Activated naive CD4-positive, alpha-beta T cell treated with anti-CD3 and anti-CD28 coated beads for 36 hours (primary cell): ENCODE measurements at regions of chr1 and their contacts with region 1.

Region 1: GRCh38 chr1:92831762-92832536 is at the start of gene RPL5:
- DNase-seq: peak; percentile 98
- H3K4me3 Mint-ChIP-seq: peak within 1 kb of the TSS; percentile 98
- H3K27ac Mint-ChIP-seq: peak within 1 kb of the TSS; percentile 99
- H3K4me1 Mint-ChIP-seq: peaks cover 38% of the 10 kb centered on the region
- H3K27me3 Mint-ChIP-seq: no peaks in the 10 kb centered on the region
- total RNA-seq, gene RPL5: 1,793 to 1,819 TPM

Region 2: DNA sequence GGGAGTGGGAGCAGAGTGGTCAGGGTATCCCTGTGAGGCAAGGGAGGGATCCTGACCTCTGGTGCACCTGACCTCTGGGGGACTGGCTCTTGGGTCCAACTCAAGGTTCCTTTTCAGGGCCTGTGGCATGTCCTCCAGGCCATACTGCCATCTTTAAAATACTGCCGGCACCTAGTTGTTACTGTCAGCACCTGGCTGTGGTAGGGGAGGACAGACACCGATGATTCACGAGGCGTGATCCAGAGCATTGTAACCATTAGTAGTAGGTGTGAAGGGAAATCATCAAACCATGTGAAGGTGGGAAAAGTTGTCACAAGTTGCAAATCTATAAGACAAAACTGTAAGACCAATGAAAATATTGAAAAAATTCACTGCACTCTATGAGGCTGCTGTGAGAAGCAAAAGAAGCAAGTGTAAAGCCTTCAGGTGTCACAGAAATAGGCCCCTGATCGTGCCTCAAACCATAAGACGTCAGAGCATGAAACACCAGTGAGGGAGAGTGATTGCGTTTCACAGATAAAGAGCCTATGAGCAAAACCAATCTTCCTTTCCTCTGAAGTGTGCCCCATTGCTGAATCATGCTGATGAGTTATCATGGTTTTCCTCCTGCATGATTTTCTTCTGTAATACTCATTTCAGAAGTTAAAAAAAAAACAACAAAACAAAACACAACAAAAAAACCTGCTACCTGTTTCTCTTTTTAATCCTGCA is 1276.0 kb before region 1 on chr1:
- CTCF ChIA-PET with region 1: no interaction called
- intact Hi-C with region 1: loop called (anchors 5 kb)
- DNase-seq: peak; percentile 84
- H3K4me3 Mint-ChIP-seq: peak overlapping the region; percentile 26
- H3K27ac Mint-ChIP-seq: peak overlapping the region; percentile 90
- H3K4me1 Mint-ChIP-seq: peaks cover 68% of the 10 kb centered on the region
- H3K27me3 Mint-ChIP-seq: no peaks in the 10 kb centered on the region

Region 3: DNA sequence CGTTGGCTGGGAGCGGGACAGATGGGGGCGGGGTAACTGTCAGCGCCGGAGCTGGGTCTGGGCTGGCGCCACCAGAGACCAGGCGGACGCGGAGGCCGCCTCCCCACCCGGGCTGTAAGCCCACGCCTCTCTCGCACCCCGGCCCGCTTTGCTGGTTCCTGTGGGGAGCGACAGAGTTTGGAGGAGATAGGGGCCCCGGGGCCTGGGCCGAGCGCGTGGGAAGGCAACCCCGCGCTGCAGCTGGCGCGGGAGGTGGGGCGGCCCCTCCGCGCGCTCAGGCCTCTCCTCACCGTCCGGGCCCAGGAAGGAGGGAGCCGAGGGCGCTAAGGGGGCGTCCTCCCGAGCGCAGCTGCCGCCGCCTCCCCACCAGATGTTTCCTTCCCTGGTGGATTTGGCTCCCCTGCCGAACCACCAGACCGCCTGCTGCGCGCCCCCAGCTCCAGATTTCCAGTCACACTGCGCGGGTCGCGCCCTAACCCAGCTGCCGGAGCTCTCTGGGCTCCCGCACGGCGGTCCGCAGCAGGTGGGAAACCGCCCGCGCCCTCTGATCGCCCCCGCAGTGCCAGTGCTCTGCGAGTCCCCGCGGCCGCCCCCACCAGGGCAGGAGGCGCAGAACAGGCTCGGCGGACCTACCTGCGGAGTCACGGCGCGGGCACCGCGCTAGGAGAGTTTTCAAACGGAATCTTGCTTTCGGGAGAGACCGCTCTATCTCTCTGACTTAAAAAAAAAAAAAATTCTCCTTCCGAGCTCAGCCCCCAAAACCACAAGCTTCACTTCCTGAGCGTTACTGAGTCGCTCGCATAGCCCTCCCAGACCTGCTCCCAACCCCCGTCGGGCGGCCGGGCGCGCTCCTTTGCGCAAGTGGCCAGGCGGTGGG is 346.3 kb before region 1 on chr1:
- CTCF ChIA-PET with region 1: no interaction called
- intact Hi-C with region 1: loop called (anchors 5 kb)
- DNase-seq: peak; percentile 91
- H3K4me3 Mint-ChIP-seq: peak overlapping the region; percentile 90
- H3K27ac Mint-ChIP-seq: peak overlapping the region; percentile 93
- H3K4me1 Mint-ChIP-seq: peaks cover 38% of the 10 kb centered on the region
- H3K27me3 Mint-ChIP-seq: no peaks in the 10 kb centered on the region

Region 4: DNA sequence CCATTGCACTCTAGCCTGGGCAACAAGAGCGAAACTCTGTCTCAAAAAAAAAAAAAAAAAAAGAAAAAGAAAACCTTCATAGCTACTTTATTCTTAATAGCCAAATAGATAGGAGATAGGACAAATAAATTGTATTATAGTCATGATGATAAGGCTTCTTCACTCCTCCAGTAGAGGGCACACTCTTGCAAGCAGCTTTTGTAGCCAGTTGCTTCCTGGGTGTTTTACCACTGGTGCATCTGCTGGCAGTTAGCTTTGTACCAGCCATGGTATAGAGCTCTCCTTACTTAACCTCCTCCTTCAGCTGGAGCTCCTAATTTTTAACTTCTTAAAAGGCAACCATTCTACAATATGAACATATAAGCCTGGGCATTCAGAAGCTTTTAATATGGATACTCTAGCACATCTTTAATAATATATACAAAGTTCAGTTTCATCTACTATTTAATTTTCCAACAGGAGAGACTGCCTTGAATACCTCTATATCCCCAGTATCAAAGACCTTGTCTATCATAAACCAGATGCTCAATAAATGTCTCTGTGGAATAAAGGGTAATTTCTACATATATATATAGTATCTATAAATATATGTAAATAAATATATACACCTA is 82.8 kb before region 1 on chr1:
- CTCF ChIA-PET with region 1: interaction called, 5 read pairs
- intact Hi-C with region 1: loop called (anchors 5 kb)
- DNase-seq: peak; percentile 60
- H3K4me3 Mint-ChIP-seq: no peak overlapping the region
- H3K27ac Mint-ChIP-seq: no peak overlapping the region
- H3K4me1 Mint-ChIP-seq: no peaks in the 10 kb centered on the region
- H3K27me3 Mint-ChIP-seq: no peaks in the 10 kb centered on the region

Region 5: GRCh38 chr1:92817986-92818764 is 13.8 kb before region 1 on chr1:
- CTCF ChIA-PET with region 1: interaction called, 22 read pairs
- intact Hi-C with region 1: no loop called
- DNase-seq: peak; percentile 16
- H3K4me3 Mint-ChIP-seq: no peak overlapping the region
- H3K27ac Mint-ChIP-seq: no peak overlapping the region
- H3K4me1 Mint-ChIP-seq: no peaks in the 10 kb centered on the region
- H3K27me3 Mint-ChIP-seq: no peaks in the 10 kb centered on the region

Region 6: DNA sequence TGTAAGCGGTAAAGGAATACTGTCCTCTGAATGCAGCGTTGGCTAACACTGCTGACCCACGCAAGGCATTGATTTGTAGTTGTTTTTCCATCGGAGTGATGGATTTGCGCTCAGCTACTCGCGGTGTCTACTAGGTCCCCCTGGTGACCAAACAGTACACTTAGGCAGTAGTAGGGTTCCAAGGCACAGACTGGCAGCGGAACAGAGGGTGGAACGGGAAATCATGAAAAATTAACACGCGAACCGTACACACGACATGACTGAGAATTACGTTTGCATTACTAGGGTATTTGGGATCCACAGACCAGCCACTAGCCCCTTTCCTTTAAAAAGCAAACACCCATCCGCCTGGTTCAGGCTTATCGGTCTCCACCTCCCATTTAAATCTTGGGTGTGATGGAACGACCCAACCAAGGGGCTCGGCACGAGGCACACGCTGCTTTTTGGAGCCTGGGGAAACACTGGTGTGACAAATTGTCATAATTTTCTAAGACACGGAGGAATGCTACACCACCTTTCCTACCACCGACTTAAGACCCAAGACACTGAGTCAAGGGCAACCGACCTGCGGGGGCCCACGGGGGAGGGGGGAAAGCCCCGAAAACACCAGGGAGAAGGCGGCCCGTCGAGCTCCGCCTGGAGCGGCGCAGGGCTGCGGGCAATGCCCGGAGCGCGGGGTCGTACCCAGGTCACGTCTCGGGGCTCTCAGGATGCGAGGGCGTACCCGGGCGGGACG is 128.6 kb after region 1 on chr1:
- CTCF ChIA-PET with region 1: interaction called, 10 read pairs
- intact Hi-C with region 1: loop called (anchors 1 kb)
- DNase-seq: peak; percentile 76
- H3K4me3 Mint-ChIP-seq: peak overlapping the region; percentile 89
- H3K27ac Mint-ChIP-seq: peak overlapping the region; percentile 94
- H3K4me1 Mint-ChIP-seq: peaks cover 41% of the 10 kb centered on the region
- H3K27me3 Mint-ChIP-seq: no peaks in the 10 kb centered on the region